Activated naive CD4-positive, alpha-beta T cell treated with anti-CD3 and anti-CD28 coated beads for 36 hours (primary cell): ENCODE measurements at regions of chr17 and their contacts with region 1.

Region 1: GRCh38 chr17:2847381-2848333 is 51.4 kb downstream of the RAP1GAP2 start:
- DNase-seq: no peak
- H3K4me3 Mint-ChIP-seq: no peak overlapping the region
- H3K27ac Mint-ChIP-seq: no peak overlapping the region
- H3K4me1 Mint-ChIP-seq: peaks cover 16% of the 10 kb centered on the region
- H3K27me3 Mint-ChIP-seq: peaks cover 12% of the 10 kb centered on the region

Region 2: GRCh38 chr17:2796164-2797125 is 51.2 kb before region 1 on chr17 and contains the start of gene RAP1GAP2:
- CTCF ChIA-PET with region 1: no interaction called
- intact Hi-C with region 1: no loop called
- DNase-seq: peak; percentile 75
- H3K4me3 Mint-ChIP-seq: peak within 1 kb of the TSS; percentile 72
- H3K27ac Mint-ChIP-seq: no peak within 1 kb of the TSS
- H3K4me1 Mint-ChIP-seq: peaks cover 65% of the 10 kb centered on the region
- H3K27me3 Mint-ChIP-seq: peaks cover 14% of the 10 kb centered on the region
- total RNA-seq, gene RAP1GAP2: 0.81 to 0.86 TPM

Region 3: DNA sequence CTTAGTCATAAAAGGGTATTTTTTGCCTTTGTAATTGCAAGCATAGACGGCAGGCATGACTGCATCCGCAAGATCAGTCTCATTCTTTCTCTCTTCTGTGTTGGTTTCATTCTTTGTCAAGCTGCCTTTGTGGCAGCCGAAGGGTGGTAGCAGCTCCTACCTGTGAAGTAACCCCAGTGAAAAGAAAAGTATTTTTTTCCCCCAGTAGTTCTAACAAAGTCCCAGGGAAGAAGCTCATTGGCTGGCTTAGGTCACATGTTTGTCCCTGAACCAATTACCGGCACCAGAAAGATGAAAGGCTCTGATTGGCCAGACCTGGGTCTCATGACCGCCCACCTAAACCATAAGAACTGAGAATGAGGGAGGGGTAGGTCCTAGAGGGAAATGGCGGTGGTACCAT is 59.2 kb after region 1 on chr17:
- CTCF ChIA-PET with region 1: interaction called, 5 read pairs
- intact Hi-C with region 1: loop called (anchors 2 kb)
- DNase-seq: peak; percentile 77
- H3K4me3 Mint-ChIP-seq: no peak overlapping the region
- H3K27ac Mint-ChIP-seq: peak overlapping the region; percentile 73
- H3K4me1 Mint-ChIP-seq: peaks cover 16% of the 10 kb centered on the region
- H3K27me3 Mint-ChIP-seq: no peaks in the 10 kb centered on the region

Region 4: DNA sequence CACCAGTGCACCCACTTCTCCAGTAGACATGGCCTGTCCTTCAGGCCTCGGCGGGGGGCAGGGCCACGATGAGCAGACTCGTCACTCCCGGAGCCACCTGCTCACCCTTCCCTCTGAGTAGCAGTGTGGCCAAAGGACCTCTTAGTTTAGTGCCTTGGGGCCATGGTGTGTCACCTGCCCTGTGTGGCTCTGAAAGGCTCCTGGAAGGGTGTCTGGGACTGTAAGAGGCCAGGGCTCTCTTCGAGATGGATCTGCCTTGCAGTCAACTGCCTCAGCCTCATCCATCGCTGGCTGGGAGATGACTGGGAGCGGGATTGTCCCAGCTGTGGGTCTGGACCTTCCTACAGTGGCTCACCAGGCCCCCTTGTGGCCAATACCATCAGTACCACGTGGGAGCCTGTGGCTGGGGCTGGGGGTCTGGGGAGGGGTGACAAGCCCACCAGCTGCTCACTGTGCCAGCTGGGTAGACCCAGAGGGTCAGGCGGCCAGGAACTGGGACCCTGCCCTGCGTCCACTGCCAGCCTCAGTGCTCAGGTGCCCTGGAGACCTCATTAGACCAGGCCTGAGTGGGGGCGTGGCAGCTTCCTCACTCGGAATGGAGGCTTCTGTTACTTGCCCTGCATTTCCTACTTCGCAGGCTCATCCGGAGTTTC is 82.3 kb after region 1 on chr17:
- CTCF ChIA-PET with region 1: interaction called, 23 read pairs
- intact Hi-C with region 1: loop called (anchors 1 kb)
- DNase-seq: peak; percentile 47
- H3K4me3 Mint-ChIP-seq: no peak overlapping the region
- H3K27ac Mint-ChIP-seq: no peak overlapping the region
- H3K4me1 Mint-ChIP-seq: peaks cover 7% of the 10 kb centered on the region
- H3K27me3 Mint-ChIP-seq: no peaks in the 10 kb centered on the region

Region 5: GRCh38 chr17:3004133-3004801 is 156.6 kb after region 1 on chr17:
- CTCF ChIA-PET with region 1: interaction called, 11 read pairs
- intact Hi-C with region 1: no loop called
- DNase-seq: peak; percentile 73
- H3K4me3 Mint-ChIP-seq: peak overlapping the region; percentile 41
- H3K27ac Mint-ChIP-seq: no peak overlapping the region
- H3K4me1 Mint-ChIP-seq: peaks cover 27% of the 10 kb centered on the region
- H3K27me3 Mint-ChIP-seq: no peaks in the 10 kb centered on the region

Region 6: GRCh38 chr17:3012926-3013581 is 165.4 kb after region 1 on chr17:
- CTCF ChIA-PET with region 1: interaction called, 57 read pairs
- intact Hi-C with region 1: loop called (anchors 1 kb)
- DNase-seq: peak; percentile 71
- H3K4me3 Mint-ChIP-seq: no peak overlapping the region
- H3K27ac Mint-ChIP-seq: no peak overlapping the region
- H3K4me1 Mint-ChIP-seq: no peaks in the 10 kb centered on the region
- H3K27me3 Mint-ChIP-seq: no peaks in the 10 kb centered on the region